ENCODE measurements at regions of chr6 and their contacts with region 1.

Region 1: DNA sequence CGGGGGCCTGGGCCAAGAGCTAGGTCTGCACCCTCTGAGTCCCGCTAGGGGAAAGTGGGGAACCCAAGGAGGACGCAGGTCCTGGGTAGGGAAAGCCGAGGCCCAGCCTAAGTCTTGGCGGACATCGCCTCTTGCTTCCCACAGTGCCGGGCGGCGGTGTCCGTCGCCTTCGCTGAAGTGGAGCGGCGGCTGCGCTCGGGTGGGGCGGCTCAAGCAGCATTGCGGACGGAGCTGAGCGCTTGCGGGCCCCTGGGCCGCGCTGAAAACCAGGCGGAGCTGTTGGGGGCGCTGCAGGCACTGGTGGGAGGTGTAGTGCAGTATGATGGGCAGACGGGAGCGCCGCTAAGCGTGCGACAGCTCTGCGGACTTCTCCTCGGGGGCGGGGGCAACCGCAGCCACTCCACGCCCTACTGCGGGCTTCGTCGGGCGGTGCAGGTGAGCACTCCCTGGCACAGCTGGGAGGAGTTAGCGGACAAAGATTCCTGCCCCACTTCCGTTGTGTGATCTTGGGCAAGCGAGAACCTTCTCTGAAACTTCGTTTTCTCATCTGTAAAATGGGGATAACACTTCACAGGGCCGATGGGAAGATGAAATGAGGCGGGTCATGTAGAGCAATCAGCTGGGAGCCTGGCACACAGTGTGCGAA is 4.2 kb downstream of the PRSS16 start:
- H3K4me3 ChIP-seq: peak overlapping the region; percentile 78
- H3K27ac ChIP-seq: peak overlapping the region; percentile 75; the same call in 1 of the 2 replicates
- H3K4me1 ChIP-seq: peaks cover 5% of the 10 kb centered on the region; the same call in 1 of the 2 replicates
- CTCF ChIP-seq: peak; percentile 99

Region 2: GRCh38 chr6:27237089-27237803 is 14.5 kb before region 1 on chr6:
- CTCF ChIA-PET with region 1: interaction called, 12 read pairs
- POLR2A ChIA-PET with region 1: interaction called, 17 read pairs
- H3K4me3 ChIP-seq: no peak overlapping the region
- H3K27ac ChIP-seq: no peak overlapping the region
- H3K4me1 ChIP-seq: no peaks in the 10 kb centered on the region
- CTCF ChIP-seq: no peak

Region 3: GRCh38 chr6:27263886-27264285 is 12.2 kb after region 1 on chr6:
- CTCF ChIA-PET with region 1: interaction called, 6 read pairs
- POLR2A ChIA-PET with region 1: interaction called, 12 read pairs
- H3K4me3 ChIP-seq: no peak overlapping the region
- H3K27ac ChIP-seq: no peak overlapping the region
- H3K4me1 ChIP-seq: no peaks in the 10 kb centered on the region
- CTCF ChIP-seq: no peak

Region 4: GRCh38 chr6:27280064-27280539 is 28.4 kb after region 1 on chr6:
- CTCF ChIA-PET with region 1: interaction called, 15 read pairs
- POLR2A ChIA-PET with region 1: interaction called, 15 read pairs
- H3K4me3 ChIP-seq: peak overlapping the region; percentile 59
- H3K27ac ChIP-seq: peak overlapping the region; percentile 54
- H3K4me1 ChIP-seq: no peaks in the 10 kb centered on the region
- CTCF ChIP-seq: no peak

Region 5: GRCh38 chr6:27295301-27296081 is 43.8 kb after region 1 on chr6:
- CTCF ChIA-PET with region 1: interaction called, 7 read pairs
- POLR2A ChIA-PET with region 1: interaction called, 15 read pairs
- H3K4me3 ChIP-seq: peak overlapping the region; percentile 83
- H3K27ac ChIP-seq: peak overlapping the region; percentile 47; the same call in 1 of the 2 replicates
- H3K4me1 ChIP-seq: no peaks in the 10 kb centered on the region
- CTCF ChIP-seq: peak; percentile 38; the same call in 1 of the 2 replicates

Region 6: GRCh38 chr6:27601668-27602254 is 350.0 kb after region 1 on chr6:
- CTCF ChIA-PET with region 1: no interaction called
- POLR2A ChIA-PET with region 1: no interaction called
- H3K4me3 ChIP-seq: peak overlapping the region; percentile 55
- H3K27ac ChIP-seq: peak overlapping the region; percentile 32; the same call in 1 of the 2 replicates
- H3K4me1 ChIP-seq: no peaks in the 10 kb centered on the region
- CTCF ChIP-seq: no peak